ENCODE measurements at regions of chr6 and their contacts with region 1.

Region 1: DNA sequence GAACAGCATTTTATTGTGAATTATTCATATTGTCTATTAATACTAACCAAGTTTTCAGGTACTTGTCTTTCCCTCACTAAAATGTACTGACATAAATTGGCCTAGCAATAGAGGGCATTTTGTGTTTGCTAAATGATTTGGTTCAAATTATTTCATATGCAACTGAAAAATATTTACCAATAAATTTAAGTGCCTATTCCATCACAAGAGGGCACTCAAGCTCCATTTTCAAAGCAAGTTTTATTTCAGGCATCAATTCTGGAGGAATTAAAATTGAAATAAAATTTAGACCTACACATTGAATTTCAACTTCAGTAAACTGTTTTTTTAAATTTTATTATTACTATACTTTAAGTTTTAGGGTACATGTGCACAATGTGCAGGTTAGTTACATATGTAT is 114.3 kb upstream of the SYNCRIP start:
- DNase-seq: no peak
- ATAC-seq: no peak
- H3K4me3 ChIP-seq: no peak overlapping the region
- H3K27ac ChIP-seq: no peak overlapping the region
- H3K4me1 ChIP-seq: no peaks in the 10 kb centered on the region
- H3K27me3 ChIP-seq: no peaks in the 10 kb centered on the region
- CTCF ChIP-seq: peak; percentile 14 to 59 (median 48)

Region 2: GRCh38 chr6:85323435-85324040 is 433.4 kb before region 1 on chr6:
- intact Hi-C with region 1: no loop called
- DNase-seq: peak; percentile 24 to 49
- ATAC-seq: peak in 3 of 8 donors; percentile 51 to 64 (median 54)
- H3K4me3 ChIP-seq: no peak overlapping the region
- H3K27ac ChIP-seq: no peak overlapping the region
- H3K4me1 ChIP-seq: no peaks in the 10 kb centered on the region
- H3K27me3 ChIP-seq: peaks cover 0 to 18% (median 0%) of the 10 kb centered on the region in 7 donors
- CTCF ChIP-seq: peak; percentile 15 to 83 (median 76)

Region 3: DNA sequence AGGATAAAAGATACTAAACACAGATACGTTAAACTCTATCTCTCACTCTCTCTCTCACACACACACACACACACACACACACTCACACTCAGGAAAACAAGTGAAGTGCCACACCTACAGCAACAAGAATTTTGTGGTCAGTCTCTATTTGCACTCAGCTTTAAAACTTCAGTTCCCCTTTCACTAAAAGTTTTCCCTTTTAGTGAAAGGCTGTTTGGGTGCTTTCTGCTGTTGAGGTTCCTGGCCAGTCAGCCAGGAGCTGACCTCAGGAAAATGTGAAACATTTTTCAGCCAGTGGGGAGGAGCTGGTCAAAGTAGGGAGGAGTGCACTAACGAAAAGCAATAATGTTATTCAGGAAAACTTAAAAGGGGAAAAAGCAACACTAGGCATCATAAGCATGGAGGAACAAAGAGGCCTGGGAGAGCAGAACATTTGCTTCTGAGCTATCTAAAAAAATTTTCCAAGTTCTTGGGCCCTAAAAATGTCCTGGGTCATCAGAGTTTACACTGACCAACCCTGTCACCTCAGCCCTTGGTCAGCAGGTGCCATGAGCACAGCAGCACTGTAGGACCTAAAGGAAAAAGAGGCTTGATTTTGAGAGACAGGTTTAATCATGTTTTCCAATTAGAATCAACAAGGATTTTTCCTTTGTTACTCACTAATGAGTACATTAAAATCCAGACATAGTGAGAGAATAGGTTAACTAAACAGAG is 337.8 kb before region 1 on chr6:
- intact Hi-C with region 1: no loop called
- DNase-seq: no peak
- ATAC-seq: peak in 1 of 8 donors; percentile 51
- H3K4me3 ChIP-seq: no peak overlapping the region
- H3K27ac ChIP-seq: no peak overlapping the region
- H3K4me1 ChIP-seq: peaks cover 0 to 6% (median 0%) of the 10 kb centered on the region in 9 donors
- H3K27me3 ChIP-seq: no peaks in the 10 kb centered on the region
- CTCF ChIP-seq: no peak

Region 4: DNA sequence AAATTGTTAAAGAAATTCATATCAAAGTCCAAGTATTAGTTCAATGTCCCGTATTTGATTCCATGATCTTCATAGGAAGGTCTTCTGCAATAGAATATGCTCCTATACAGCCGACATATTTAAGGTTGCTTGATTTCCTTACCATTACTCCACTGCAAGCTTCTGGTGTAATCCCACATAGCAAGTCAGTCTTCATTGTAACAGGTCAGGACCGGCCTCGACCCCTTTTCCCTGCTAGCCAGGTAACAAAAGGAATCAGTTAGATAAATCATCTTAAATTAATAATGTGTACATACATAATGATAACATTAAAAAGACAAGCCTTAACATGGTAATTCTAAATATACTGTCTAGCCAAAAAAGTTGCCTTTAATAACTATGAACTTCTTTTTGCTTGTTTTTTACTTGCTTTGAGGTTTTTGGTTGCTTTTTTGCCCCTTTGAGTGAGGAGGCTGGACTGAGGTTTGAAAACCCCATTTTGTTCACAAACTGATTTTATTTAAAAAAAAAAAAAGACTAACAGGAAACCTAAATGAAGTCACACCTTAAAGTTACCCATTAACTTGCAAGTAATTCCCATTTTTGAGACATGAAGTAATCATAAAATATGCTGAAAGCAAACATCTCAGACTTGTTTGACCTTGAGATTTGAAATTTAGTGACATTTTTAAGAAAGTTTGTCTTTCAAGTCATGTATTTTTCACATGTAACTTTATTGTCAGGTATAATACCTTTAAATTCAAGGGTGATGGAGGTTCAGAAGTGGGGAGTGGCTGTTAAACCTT is 144.1 kb before region 1 on chr6:
- intact Hi-C with region 1: no loop called
- DNase-seq: no peak
- ATAC-seq: no peak
- H3K4me3 ChIP-seq: no peak overlapping the region
- H3K27ac ChIP-seq: no peak overlapping the region
- H3K4me1 ChIP-seq: no peaks in the 10 kb centered on the region
- H3K27me3 ChIP-seq: no peaks in the 10 kb centered on the region
- CTCF ChIP-seq: no peak

Region 5: GRCh38 chr6:85714893-85715530 is 42.0 kb before region 1 on chr6:
- intact Hi-C with region 1: no loop called
- DNase-seq: no peak
- ATAC-seq: no peak
- H3K4me3 ChIP-seq: no peak overlapping the region
- H3K27ac ChIP-seq: no peak overlapping the region
- H3K4me1 ChIP-seq: no peaks in the 10 kb centered on the region
- H3K27me3 ChIP-seq: no peaks in the 10 kb centered on the region
- CTCF ChIP-seq: no peak

Region 6: GRCh38 chr6:86856937-86857563 is 1100.1 kb after region 1 on chr6:
- intact Hi-C with region 1: loop called in 4 of 10 experiments (anchors 5 to 10 kb)
- DNase-seq: peak in 1 of 2 donors; percentile 9
- ATAC-seq: no peak
- H3K4me3 ChIP-seq: no peak overlapping the region
- H3K27ac ChIP-seq: no peak overlapping the region
- H3K4me1 ChIP-seq: peaks cover 0 to 2% (median 0%) of the 10 kb centered on the region in 9 donors
- H3K27me3 ChIP-seq: no peaks in the 10 kb centered on the region
- CTCF ChIP-seq: peak; percentile 39 to 79 (median 67)

Region 7: GRCh38 chr6:86937219-86938079 is 1180.5 kb after region 1 on chr6 and contains the start of gene HTR1E:
- intact Hi-C with region 1: loop called in 1 of 10 experiments (anchors 5 kb)
- DNase-seq: no peak
- ATAC-seq: peak in 5 of 8 donors; percentile 47 to 69 (median 57)
- H3K4me3 ChIP-seq: peak within 1 kb of the TSS in 6 of 10 donors; percentile 12 to 34 (median 23)
- H3K27ac ChIP-seq: no peak within 1 kb of the TSS
- H3K4me1 ChIP-seq: peaks cover 0 to 7% (median 0%) of the 10 kb centered on the region in 9 donors
- H3K27me3 ChIP-seq: peaks cover 5 to 64% (median 36%) of the 10 kb centered on the region in 7 donors
- CTCF ChIP-seq: peak in 7 of 9 donors; percentile 7 to 59 (median 48)
- total RNA-seq, gene HTR1E: not detected

Region 8: DNA sequence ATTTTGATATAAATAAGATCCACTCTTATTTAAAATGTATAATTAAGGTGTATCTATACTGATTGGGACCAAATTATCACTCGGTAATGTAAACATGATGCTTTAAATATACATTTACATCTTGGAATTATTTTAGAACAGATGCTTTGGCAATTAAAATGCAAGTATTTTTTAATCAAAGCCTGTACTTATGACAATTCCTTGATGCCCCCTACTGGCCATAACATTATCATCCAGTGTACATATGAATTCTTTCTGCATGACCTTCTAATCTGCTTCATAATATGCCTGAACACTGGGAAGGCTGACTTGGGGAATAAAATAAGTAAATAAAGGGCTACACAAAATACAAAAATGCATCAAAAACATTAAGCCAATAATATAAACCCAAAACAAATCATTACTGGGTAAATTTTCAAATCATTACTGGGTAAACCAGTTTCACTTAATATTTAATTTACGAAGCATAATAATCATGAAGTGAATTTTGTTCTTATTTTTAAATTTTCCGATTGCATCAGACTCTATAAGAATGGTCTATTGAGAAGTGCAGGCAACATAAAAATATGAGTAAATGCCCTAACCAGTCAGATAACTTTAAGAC is 1272.8 kb after region 1 on chr6:
- intact Hi-C with region 1: loop called in 1 of 10 experiments (anchors 10 kb)
- DNase-seq: no peak
- ATAC-seq: no peak
- H3K4me3 ChIP-seq: no peak overlapping the region
- H3K27ac ChIP-seq: no peak overlapping the region
- H3K4me1 ChIP-seq: no peaks in the 10 kb centered on the region
- H3K27me3 ChIP-seq: no peaks in the 10 kb centered on the region
- CTCF ChIP-seq: peak in 7 of 9 donors; percentile 30 to 63 (median 51)

Measured in heart right ventricle (tissue), 16 donors.